Cardiac septum (tissue), 1 donor: ENCODE measurements at regions of chr17 and their contacts with region 1.

Region 1: GRCh38 chr17:17972126-17972951 is at the starts of genes DRC3 and TOM1L2:
- DNase-seq: peak; percentile 100
- total RNA-seq, gene DRC3: 1.9 TPM
- total RNA-seq, gene TOM1L2: 261 TPM

Region 2: DNA sequence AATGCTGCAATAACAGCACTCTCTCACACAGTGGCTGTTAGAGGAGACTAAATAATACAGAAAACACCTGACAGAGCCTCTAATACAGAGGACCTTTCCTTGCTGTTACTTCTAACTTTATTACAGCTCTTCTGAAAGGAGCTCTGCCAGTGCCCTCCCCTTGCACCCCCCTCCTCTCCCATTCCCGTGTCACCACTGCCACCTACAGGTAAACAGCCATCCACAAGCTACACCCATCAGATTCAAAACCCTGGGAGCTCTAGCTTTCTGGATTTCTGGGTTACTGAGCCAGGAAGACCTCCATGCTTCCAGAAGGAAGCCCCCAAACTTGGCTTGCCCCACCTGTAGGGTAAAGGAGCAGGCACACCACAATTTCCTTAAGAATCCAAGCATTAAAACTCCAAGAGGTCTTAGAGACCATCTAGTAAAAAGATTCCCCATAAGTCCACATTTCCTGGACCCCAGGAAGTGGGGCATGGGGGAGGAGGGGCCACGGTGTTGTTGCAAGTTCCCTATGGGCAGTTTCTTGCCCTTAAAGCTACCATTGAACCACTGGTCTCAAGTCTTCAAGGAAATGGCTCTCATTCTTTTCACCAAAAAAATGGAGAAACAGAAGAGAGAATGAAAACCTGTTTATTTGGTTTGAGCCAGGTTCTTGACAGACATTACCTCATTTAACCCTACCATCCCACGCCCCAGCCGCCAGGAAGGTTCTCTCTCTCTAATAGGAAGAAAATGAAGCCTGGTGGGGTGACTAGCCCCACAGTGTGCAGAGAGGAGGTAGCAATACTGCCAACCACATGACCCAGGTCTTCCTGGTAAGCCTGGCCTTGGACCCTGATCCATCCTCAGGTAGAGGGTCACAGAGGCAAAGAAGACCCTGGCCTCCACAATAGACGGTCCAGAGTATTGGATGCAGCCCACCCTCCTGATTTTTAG is 52.9 kb before region 1 on chr17:
- intact Hi-C with region 1: loop called (anchors 5 kb)
- DNase-seq: peak; percentile 80

Region 3: GRCh38 chr17:18038861-18039534 is 66.7 kb after region 1 on chr17 and contains the starts of genes ATPAF2 and GID4:
- intact Hi-C with region 1: loop called (anchors 5 kb)
- DNase-seq: peak; percentile 100
- total RNA-seq, gene ATPAF2: 31.5 TPM
- total RNA-seq, gene GID4: 17.9 TPM